Uterus (tissue), 4 donors: ENCODE measurements at regions of chr21 and their contacts with region 1.

Region 1: GRCh38 chr21:39527664-39528381 is 76.1 kb downstream of the SH3BGR start:
- DNase-seq: no peak
- H3K4me3 ChIP-seq: no peak overlapping the region
- H3K27ac ChIP-seq: no peak overlapping the region
- H3K4me1 ChIP-seq: no peaks in the 10 kb centered on the region
- H3K27me3 ChIP-seq: no peaks in the 10 kb centered on the region
- CTCF ChIP-seq: no peak
- POLR2A ChIP-seq: no peak

Region 2: DNA sequence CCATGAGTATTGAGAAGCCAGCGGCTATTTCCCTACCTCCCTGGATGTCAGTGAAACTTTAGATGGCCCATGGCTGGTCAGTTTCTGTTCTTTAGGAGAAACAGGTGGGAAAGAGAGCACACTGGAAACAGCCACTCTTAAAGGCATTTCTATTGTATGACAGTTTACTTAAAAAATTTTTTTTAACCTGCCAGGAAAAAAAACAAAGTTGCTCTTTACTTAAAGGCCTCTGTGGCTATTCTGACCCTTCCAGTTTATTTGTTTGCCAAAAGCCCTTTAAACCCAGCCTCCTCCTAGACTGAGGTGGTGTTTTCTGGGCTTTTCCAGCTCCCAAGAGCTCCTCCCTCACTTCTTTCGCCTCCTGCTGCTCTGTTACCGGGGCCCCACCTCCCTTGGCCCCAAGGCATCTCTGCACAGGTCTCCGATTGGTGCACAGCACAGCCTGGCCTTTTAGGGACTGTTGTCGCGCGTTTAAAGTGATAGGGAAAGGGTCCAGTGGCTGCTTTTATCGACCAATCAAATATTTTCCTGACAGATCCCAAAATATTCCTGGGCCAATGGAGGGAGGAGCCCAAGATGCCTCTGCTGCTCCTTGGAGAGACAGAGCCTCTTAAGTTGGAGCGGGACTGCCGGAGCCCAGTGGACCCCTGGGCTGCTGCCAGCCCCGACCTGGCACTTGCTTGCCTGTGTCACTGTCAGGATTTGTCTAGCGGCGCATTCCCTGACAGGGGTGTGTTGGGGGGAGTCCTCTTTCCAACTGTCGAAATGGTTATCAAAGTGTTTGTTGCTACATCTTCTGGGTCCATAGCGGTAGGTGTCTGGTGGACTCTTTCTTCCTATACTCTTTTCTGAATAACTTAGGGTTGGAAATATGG is 76.3 kb before region 1 on chr21 and contains the start of gene SH3BGR:
- intact Hi-C with region 1: no loop called
- DNase-seq: peak in 1 of 2 donors; percentile 16
- H3K4me3 ChIP-seq: no peak within 1 kb of the TSS
- H3K27ac ChIP-seq: peak within 1 kb of the TSS in 1 of 2 donors; percentile 20
- H3K4me1 ChIP-seq: no peaks in the 10 kb centered on the region
- H3K27me3 ChIP-seq: no peaks in the 10 kb centered on the region
- CTCF ChIP-seq: no peak
- POLR2A ChIP-seq: no peak
- total RNA-seq, gene SH3BGR: 1.1 to 27.9 (median 8.1) TPM in 3 of 4 donors, not detected in the other

Region 3: GRCh38 chr21:39715804-39716397 is 188.1 kb after region 1 on chr21:
- intact Hi-C with region 1: loop called (anchors 10 kb)
- DNase-seq: peak; percentile 22 to 47
- H3K4me3 ChIP-seq: no peak overlapping the region
- H3K27ac ChIP-seq: no peak overlapping the region
- H3K4me1 ChIP-seq: no peaks in the 10 kb centered on the region
- H3K27me3 ChIP-seq: no peaks in the 10 kb centered on the region
- CTCF ChIP-seq: peak; percentile 40 to 67 (median 50)
- POLR2A ChIP-seq: no peak